ENCODE measurements at regions of chr4 and their contacts with region 1.

Region 1: GRCh38 chr4:13484122-13484748 is at the start of gene RAB28:
- DNase-seq: peak; percentile 95
- H3K4me3 ChIP-seq: peak within 1 kb of the TSS; percentile 90
- H3K27ac ChIP-seq: peak within 1 kb of the TSS; percentile 99
- H3K4me1 ChIP-seq: peaks cover 30% of the 10 kb centered on the region
- H3K27me3 ChIP-seq: no peaks in the 10 kb centered on the region
- CTCF ChIP-seq: no peak
- total RNA-seq, gene RAB28: 22.6 and 24.8 TPM in 2 replicates

Region 2: GRCh38 chr4:13047591-13047990 is 436.6 kb before region 1 on chr4:
- CTCF ChIA-PET with region 1: no interaction called
- POLR2A ChIA-PET with region 1: no interaction called
- intact Hi-C with region 1: no loop called
- DNase-seq: no peak
- H3K4me3 ChIP-seq: no peak overlapping the region
- H3K27ac ChIP-seq: no peak overlapping the region
- H3K4me1 ChIP-seq: no peaks in the 10 kb centered on the region
- H3K27me3 ChIP-seq: no peaks in the 10 kb centered on the region
- CTCF ChIP-seq: no peak

Region 3: DNA sequence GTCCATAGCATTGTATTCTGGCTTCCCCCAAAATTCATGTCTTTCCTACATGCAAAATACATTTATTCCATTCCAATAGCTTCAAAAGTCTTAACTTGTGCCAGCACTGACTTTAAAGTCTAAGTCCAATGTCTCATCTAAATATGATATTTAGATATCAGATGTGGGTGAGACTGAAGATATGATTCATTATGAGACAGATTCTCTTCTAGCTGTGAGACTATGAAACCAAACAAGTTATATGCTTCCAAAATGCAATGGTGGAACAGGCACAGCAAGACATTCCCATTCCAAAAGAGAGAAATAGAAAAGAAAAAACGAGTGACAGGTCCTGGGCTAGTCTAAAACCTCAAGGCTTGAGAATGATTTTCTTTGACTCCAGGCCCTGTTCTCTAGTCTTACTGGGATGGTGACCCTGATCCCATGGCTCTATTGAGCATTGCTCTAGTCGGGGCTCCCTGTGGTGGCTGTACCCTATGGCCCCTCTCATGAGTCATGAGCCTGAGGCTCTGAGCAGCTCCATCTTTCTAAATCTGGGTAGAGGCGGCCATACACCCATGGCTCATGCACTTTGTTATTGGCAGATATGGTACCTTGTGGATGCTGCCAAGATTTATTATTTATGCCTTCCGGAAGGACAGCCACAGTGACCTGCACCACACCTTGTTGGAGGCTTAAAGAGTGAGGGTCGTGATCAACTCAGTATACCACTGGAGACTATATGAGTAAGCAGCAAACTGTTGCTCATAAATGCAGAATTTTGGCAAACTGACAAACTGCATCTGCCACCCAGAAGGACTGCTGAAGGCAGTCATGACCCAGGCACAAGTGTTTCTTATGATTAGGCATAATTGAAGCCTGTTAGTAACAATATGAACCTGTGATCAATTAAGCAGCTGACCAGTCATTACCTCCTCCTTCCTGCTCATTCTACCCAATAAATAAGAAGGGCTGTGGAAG is 181.7 kb after region 1 on chr4:
- CTCF ChIA-PET with region 1: no interaction called
- POLR2A ChIA-PET with region 1: no interaction called
- intact Hi-C with region 1: no loop called
- DNase-seq: no peak
- H3K4me3 ChIP-seq: no peak overlapping the region
- H3K27ac ChIP-seq: no peak overlapping the region
- H3K4me1 ChIP-seq: no peaks in the 10 kb centered on the region
- H3K27me3 ChIP-seq: no peaks in the 10 kb centered on the region
- CTCF ChIP-seq: no peak

Region 4: DNA sequence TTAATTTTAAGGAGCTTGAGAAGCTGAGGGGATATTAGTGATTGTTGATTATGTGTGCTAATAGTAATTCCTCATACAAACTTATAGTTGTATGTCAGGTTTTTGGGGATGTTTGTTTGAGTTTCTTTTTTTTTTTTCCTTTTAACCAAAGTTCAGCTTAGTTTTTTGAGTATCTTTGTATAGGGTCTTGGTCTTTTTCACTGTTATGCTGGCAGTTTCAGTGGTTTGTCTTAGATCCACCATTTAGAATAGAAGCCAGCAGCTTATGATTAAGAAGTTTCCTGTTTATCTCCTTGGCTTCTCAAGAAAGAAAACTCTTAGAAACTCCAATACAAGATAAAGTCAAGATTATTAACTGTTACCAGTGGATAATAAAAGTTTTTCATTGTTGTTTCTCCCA is 1534.1 kb after region 1 on chr4:
- CTCF ChIA-PET with region 1: no interaction called
- POLR2A ChIA-PET with region 1: no interaction called
- intact Hi-C with region 1: loop called (anchors 10 kb)
- DNase-seq: no peak
- H3K4me3 ChIP-seq: peak overlapping the region; percentile 12
- H3K27ac ChIP-seq: peak overlapping the region; percentile 68
- H3K4me1 ChIP-seq: peaks cover 89% of the 10 kb centered on the region
- H3K27me3 ChIP-seq: no peaks in the 10 kb centered on the region
- CTCF ChIP-seq: no peak

Region 5: DNA sequence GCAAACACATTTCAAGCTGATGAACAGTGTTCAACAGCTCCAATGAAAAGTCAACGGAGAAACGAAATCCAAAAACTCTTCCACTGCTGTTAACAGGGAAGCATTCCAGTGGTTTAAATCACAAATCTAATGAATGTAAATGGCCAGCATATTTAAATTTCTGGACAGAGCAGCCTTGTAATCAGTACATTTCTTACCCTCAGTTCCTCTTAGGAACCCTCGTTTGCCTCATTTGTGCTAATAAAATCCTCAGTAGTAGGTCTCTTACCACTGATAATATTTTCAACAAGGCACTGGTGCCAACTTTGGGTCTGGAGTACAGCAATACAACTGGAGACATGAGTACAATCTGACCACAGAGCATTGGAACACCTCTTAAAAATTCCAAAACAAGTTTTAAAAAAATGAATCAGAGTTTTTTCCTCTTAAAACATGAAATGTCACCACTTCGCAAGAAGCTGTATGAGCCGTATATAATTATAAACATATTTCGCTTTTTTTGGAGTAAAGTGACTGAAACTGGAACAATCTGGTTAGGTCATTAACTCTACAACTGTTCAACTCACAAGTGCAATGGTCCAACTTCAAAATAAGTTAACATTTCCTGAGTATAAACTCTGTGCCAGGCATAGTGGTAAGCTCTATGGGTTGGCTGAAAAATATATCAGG is 1729.2 kb after region 1 on chr4:
- CTCF ChIA-PET with region 1: no interaction called
- POLR2A ChIA-PET with region 1: no interaction called
- intact Hi-C with region 1: no loop called
- DNase-seq: no peak
- H3K4me3 ChIP-seq: no peak overlapping the region
- H3K27ac ChIP-seq: no peak overlapping the region
- H3K4me1 ChIP-seq: no peaks in the 10 kb centered on the region
- H3K27me3 ChIP-seq: no peaks in the 10 kb centered on the region
- CTCF ChIP-seq: no peak

Measured in A673 (cell line).